ENCODE measurements at regions of chr3 and their contacts with region 1.

Region 1: DNA sequence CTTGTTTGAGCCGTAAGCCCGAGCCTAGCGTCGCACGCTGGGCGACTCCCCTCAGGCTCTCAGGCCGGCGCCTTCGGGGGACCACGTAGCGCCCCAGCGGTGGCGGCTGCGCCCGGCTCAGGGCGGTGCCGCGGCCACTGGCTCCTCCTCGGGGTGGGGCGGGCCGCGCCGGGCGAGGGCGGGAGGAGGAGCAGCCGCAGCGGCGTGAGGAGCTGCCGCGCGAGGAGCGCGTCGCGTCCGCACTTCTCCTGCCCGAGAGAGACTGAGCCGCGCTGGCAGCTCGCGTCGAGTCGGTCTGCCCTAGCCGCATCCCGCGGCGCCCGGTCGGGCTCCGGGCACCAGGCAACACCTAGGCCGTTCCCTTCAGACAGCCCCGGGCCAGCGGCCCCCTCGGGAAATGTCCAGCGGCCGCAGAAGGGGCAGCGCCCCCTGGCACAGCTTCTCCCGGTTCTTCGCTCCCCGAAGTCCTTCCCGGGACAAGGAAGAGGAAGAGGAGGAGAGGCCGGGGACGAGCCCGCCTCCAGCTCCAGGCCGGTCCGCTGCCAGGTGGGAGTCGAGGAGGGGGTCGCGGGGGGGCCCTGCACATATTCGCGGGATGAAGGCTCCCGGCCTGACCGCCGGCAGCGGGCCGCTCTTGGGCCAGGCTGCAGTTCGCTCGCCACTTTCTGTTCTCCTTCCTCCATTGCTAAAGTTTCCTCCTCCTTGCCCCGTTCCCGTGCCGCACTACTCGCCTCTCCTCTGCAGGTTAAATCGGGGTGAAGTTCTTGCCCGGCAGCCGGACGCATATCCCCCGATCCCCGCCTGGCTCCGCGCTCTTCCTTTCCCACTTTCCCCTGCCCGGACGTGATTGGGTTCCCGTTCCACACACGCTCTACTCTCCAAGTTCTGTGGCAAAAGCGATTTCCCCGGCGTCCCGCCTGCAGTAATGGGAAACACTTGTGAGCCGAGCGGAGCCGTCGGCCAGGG is at the start of gene CRYBG3:
- DNase-seq: peak; percentile 63 to 90 (median 78)
- ATAC-seq: peak; percentile 98
- H3K4me3 ChIP-seq: peak within 1 kb of the TSS; percentile 61 to 75
- H3K4me3 Mint-ChIP-seq: peak within 1 kb of the TSS; percentile 95
- H3K27ac ChIP-seq: peak within 1 kb of the TSS; percentile 11 to 28
- H3K27ac Mint-ChIP-seq: peak within 1 kb of the TSS; percentile 81
- H3K4me1 ChIP-seq: peaks cover 11% of the 10 kb centered on the region
- H3K4me1 Mint-ChIP-seq: peaks cover 21% of the 10 kb centered on the region
- H3K27me3 ChIP-seq: no peaks in the 10 kb centered on the region
- H3K27me3 Mint-ChIP-seq: peaks cover 13% of the 10 kb centered on the region
- CTCF ChIP-seq: no peak
- total RNA-seq, gene CRYBG3: 1.00 to 1.1 TPM

Region 2: DNA sequence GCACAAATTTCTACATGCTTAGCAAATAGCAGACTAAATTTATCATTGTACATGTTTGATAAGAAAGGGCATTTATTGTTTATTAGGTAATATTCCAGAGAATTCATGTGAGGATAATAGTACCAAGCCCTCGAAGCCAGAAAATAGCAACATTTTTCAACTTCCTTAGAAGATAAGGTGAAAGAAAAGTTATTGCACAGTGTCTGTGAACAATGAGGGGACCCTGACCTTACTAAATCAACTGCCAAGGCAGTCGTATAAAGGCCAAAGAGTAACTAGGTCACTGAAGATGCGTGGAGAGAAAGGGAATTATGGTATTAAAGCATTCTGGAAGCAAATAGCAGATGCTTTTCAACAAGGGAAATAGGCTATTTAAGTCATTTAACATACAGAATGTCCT is 77.8 kb before region 1 on chr3:
- CTCF ChIA-PET with region 1: no interaction called
- POLR2A ChIA-PET with region 1: no interaction called
- intact Hi-C with region 1: no loop called
- DNase-seq: no peak
- ATAC-seq: no peak
- H3K4me3 ChIP-seq: no peak overlapping the region
- H3K4me3 Mint-ChIP-seq: no peak overlapping the region
- H3K27ac ChIP-seq: no peak overlapping the region
- H3K27ac Mint-ChIP-seq: no peak overlapping the region
- H3K4me1 ChIP-seq: no peaks in the 10 kb centered on the region
- H3K4me1 Mint-ChIP-seq: no peaks in the 10 kb centered on the region
- H3K27me3 ChIP-seq: no peaks in the 10 kb centered on the region
- H3K27me3 Mint-ChIP-seq: peaks cover 12% of the 10 kb centered on the region
- CTCF ChIP-seq: no peak

Region 3: GRCh38 chr3:97764407-97765238 is 57.5 kb before region 1 on chr3 and contains the start of gene ARL6:
- CTCF ChIA-PET with region 1: no interaction called
- POLR2A ChIA-PET with region 1: interaction called, 5 read pairs
- intact Hi-C with region 1: loop called (anchors 1 to 5 kb)
- DNase-seq: peak; percentile 28 to 83 (median 70)
- ATAC-seq: peak; percentile 90
- H3K4me3 ChIP-seq: peak within 1 kb of the TSS; percentile 76 to 88
- H3K4me3 Mint-ChIP-seq: peak within 1 kb of the TSS; percentile 98
- H3K27ac ChIP-seq: peak within 1 kb of the TSS; percentile 64 to 72
- H3K27ac Mint-ChIP-seq: peak within 1 kb of the TSS; percentile 95
- H3K4me1 ChIP-seq: peaks cover 14% of the 10 kb centered on the region
- H3K4me1 Mint-ChIP-seq: peaks cover 34% of the 10 kb centered on the region
- H3K27me3 ChIP-seq: no peaks in the 10 kb centered on the region
- H3K27me3 Mint-ChIP-seq: no peaks in the 10 kb centered on the region
- CTCF ChIP-seq: no peak
- total RNA-seq, gene ARL6: 0.97 to 1.1 TPM

Region 4: DNA sequence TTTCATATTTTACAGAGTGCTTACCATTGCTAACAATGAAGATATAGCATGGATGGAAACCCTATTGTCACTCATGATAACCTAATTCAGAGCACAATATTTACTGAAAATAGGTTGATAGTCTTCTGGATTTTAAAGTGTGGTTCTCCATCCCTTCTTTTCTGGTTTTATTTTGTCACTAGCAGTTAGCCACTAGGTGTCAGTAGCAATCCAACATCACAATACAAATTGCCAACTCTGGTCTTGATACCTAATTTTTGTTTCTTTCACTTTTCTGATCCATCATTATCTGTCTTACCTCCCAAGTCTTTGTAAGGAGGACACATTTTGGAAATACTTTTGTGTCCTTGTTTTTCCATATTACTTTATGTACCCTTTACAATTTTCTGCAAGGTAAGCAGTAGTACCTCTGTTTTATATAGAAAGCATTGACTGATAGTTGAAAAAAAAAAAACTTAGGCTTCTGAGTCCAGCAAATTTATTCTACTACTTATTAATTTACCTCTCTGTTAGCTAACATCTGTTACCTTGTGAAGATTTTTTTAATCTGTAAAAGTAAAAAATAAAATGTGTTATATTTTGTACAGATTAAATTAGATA is 28.6 kb before region 1 on chr3:
- CTCF ChIA-PET with region 1: interaction called, 3 read pairs
- POLR2A ChIA-PET with region 1: interaction called, 3 read pairs
- intact Hi-C with region 1: loop called in 1 of 2 experiments (anchors 2 kb)
- DNase-seq: peak in 3 of 9 experiments; percentile 14 to 78 (median 73)
- ATAC-seq: peak; percentile 71
- H3K4me3 ChIP-seq: no peak overlapping the region
- H3K4me3 Mint-ChIP-seq: no peak overlapping the region
- H3K27ac ChIP-seq: no peak overlapping the region
- H3K27ac Mint-ChIP-seq: no peak overlapping the region
- H3K4me1 ChIP-seq: no peaks in the 10 kb centered on the region
- H3K4me1 Mint-ChIP-seq: no peaks in the 10 kb centered on the region
- H3K27me3 ChIP-seq: no peaks in the 10 kb centered on the region
- H3K27me3 Mint-ChIP-seq: no peaks in the 10 kb centered on the region
- CTCF ChIP-seq: peak; percentile 81

Region 5: DNA sequence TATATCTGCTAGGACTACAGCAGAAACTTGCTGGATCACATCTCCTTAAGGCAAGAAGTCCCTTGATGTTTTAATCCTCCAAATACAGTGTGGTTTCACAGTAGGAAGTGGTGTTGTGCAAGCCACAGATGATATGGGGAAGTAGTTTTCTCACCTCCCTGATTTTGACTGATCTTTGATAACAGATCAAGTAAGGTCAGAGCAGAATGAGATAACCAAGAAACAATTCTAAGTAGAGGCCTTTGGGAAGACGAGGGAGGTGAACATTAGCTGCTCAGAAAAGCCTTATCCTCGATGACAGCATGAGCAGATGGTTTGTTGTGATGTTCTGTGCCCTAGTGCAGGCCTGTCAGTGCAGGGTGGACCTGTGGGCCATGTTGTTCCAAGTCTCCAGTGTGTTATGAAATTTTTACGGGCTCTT is 88.8 kb after region 1 on chr3:
- CTCF ChIA-PET with region 1: no interaction called
- POLR2A ChIA-PET with region 1: interaction called, 12 read pairs
- intact Hi-C with region 1: loop called in 1 of 2 experiments (anchors 2 kb)
- DNase-seq: peak in 5 of 9 experiments; percentile 2 to 71 (median 49)
- ATAC-seq: peak; percentile 75
- H3K4me3 ChIP-seq: peak overlapping the region; percentile 10 to 24
- H3K4me3 Mint-ChIP-seq: peak overlapping the region; percentile 82
- H3K27ac ChIP-seq: peak overlapping the region; percentile 45 to 59
- H3K27ac Mint-ChIP-seq: peak overlapping the region; percentile 94
- H3K4me1 ChIP-seq: peaks cover 18% of the 10 kb centered on the region
- H3K4me1 Mint-ChIP-seq: peaks cover 17% of the 10 kb centered on the region
- H3K27me3 ChIP-seq: no peaks in the 10 kb centered on the region
- H3K27me3 Mint-ChIP-seq: no peaks in the 10 kb centered on the region
- CTCF ChIP-seq: no peak

Region 6: GRCh38 chr3:98291332-98291957 is 469.4 kb after region 1 on chr3:
- CTCF ChIA-PET with region 1: no interaction called
- POLR2A ChIA-PET with region 1: no interaction called
- intact Hi-C with region 1: no loop called
- DNase-seq: no peak
- ATAC-seq: no peak
- H3K4me3 ChIP-seq: no peak overlapping the region
- H3K4me3 Mint-ChIP-seq: no peak overlapping the region
- H3K27ac ChIP-seq: no peak overlapping the region
- H3K27ac Mint-ChIP-seq: no peak overlapping the region
- H3K4me1 ChIP-seq: no peaks in the 10 kb centered on the region
- H3K4me1 Mint-ChIP-seq: no peaks in the 10 kb centered on the region
- H3K27me3 ChIP-seq: no peaks in the 10 kb centered on the region
- H3K27me3 Mint-ChIP-seq: peaks cover 12% of the 10 kb centered on the region
- CTCF ChIP-seq: no peak